Cardiac septum (tissue), 1 donor: ENCODE measurements at regions of chr2 and their contacts with region 1.

Region 1: GRCh38 chr2:232632908-232633732 is at the start of gene EFHD1:
- DNase-seq: peak; percentile 84
- total RNA-seq, gene EFHD1: 20.1 TPM

Region 2: GRCh38 chr2:232333361-232334270 is 299.5 kb before region 1 on chr2:
- intact Hi-C with region 1: no loop called
- DNase-seq: peak; percentile 74

Region 3: DNA sequence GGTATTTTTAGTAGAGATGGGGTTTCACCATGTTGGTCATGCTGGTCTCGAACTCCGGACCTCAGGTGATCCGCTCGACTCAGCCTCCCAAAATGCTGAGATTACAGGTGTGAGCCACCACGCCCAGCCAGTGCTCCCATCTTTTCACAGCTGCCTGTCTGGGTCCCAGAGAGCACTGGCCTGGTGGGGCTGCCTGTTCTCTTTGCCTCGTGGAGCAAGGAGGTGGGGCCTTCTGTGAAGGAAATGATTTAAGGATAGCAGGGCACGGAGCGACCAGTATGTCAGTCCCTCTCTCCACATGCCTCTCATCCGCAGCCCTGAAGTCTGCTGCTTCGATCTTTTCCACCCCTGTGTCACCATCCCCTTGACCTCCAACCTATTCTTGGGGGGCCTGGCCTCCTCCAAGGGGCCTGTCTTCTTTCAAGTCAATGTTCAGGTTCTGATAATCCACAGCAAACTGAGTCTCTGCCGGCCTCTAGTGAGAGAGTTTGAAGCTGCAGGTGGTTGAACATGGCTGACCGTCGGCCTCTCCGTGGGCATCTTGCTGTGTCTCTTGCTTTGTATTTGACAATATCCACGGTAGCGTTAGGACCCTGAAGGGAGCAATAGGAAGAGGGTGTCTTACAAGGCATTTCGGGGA is 35.8 kb after region 1 on chr2:
- intact Hi-C with region 1: loop called (anchors 2 kb)
- DNase-seq: no peak

Region 4: GRCh38 chr2:232697100-232697865 is 64.2 kb after region 1 on chr2 and contains the start of gene GIGYF2:
- intact Hi-C with region 1: loop called (anchors 5 kb)
- DNase-seq: peak; percentile 98
- total RNA-seq, gene GIGYF2: 62.5 TPM